ENCODE measurements at regions of chr19 and their contacts with region 1.

Region 1: DNA sequence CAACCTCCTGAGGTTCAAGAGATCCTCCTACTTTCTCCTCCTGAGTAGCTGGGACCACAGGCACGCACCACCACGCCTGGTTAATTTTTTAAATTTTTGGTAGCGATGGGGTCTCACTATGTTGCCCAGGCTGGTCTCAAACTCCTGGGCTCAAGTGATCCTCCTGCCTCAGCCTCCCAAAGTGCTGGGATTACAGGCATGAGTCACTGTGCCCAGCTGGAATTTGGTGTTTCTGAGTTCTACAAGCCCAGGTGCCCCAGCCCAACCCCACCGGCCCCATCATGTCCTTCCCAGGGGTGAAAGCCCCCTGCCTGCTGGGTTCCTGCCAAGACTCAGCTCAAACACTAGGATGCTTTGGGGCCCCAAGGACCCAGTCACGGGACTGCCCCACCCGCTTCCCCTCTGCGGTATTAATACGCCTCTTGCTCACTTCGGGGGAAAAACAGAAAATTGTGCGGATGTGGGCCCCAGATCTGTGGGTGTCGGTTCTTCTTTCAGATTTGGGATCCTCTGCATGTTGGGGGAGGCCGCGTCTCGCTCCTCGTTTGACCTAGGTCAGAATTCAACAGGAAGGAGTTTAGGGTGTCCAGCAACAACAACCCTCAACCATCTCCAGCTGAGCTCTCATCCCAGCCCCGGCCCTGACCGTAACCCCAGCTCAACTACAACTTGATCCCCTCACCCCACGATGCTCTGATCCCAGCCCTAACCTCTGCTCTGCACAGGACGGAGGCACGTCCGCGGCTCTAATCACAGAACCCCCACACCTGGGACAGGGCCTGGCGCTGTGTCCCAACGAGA is 3.7 kb upstream of the FCER2 start:
- DNase-seq: peak; percentile 73 to 83 (median 76)
- H3K4me3 ChIP-seq: peak overlapping the region; percentile 30 to 45
- H3K4me3 Mint-ChIP-seq: peak overlapping the region; percentile 76 to 90 (median 84)
- H3K27ac ChIP-seq: peak overlapping the region; percentile 72
- H3K27ac Mint-ChIP-seq: peak overlapping the region; percentile 87 to 98 (median 98)
- H3K4me1 ChIP-seq: peaks cover 38% of the 10 kb centered on the region
- H3K4me1 Mint-ChIP-seq: peaks cover 19 to 51% (median 33%) of the 10 kb centered on the region in 4 donors
- H3K27me3 ChIP-seq: no peaks in the 10 kb centered on the region
- H3K27me3 Mint-ChIP-seq: no peaks in the 10 kb centered on the region

Region 2: DNA sequence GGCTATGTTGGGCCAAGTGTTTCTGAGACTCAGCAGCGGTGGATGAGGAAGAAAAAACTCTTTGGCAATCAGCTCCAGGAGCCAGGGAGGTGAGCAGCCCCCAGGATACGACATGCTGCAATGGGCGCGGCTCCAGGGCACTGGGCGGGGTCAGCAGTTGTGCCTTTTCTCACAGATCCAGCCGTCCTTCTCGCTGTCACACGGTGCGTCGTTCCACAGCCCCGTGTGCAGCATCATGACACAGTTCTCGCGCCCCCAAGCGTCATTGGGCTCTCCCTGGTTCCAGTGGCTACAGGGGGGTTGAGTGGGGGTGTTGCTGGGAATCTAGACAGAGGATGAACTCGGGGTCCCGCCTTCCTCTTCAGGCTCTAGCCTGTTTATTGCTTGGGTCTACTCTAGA is 23.6 kb after region 1 on chr19:
- CTCF ChIA-PET with region 1: no interaction called
- POLR2A ChIA-PET with region 1: no interaction called
- intact Hi-C with region 1: no loop called
- DNase-seq: no peak
- H3K4me3 ChIP-seq: no peak overlapping the region
- H3K4me3 Mint-ChIP-seq: peak overlapping the region in 2 of 8 donors; percentile 34 to 49
- H3K27ac ChIP-seq: no peak overlapping the region
- H3K27ac Mint-ChIP-seq: no peak overlapping the region
- H3K4me1 ChIP-seq: peaks cover 17% of the 10 kb centered on the region
- H3K4me1 Mint-ChIP-seq: peaks cover 2 to 17% (median 12%) of the 10 kb centered on the region in 4 donors
- H3K27me3 ChIP-seq: peaks cover 21% of the 10 kb centered on the region
- H3K27me3 Mint-ChIP-seq: peaks cover 33 to 34% of the 10 kb centered on the region in 2 donors

Region 3: GRCh38 chr19:7751157-7751783 is 45.7 kb after region 1 on chr19:
- CTCF ChIA-PET with region 1: no interaction called
- POLR2A ChIA-PET with region 1: no interaction called
- intact Hi-C with region 1: loop called (anchors 10 kb)
- DNase-seq: peak in 2 of 5 donors; percentile 40 to 64
- H3K4me3 ChIP-seq: no peak overlapping the region
- H3K4me3 Mint-ChIP-seq: peak overlapping the region in 1 of 8 donors; percentile 55
- H3K27ac ChIP-seq: no peak overlapping the region
- H3K27ac Mint-ChIP-seq: peak overlapping the region in 4 of 7 donors; percentile 17 to 77 (median 59)
- H3K4me1 ChIP-seq: no peaks in the 10 kb centered on the region
- H3K4me1 Mint-ChIP-seq: peaks cover 3 to 10% (median 8%) of the 10 kb centered on the region in 4 donors
- H3K27me3 ChIP-seq: no peaks in the 10 kb centered on the region
- H3K27me3 Mint-ChIP-seq: peaks cover 4 to 7% of the 10 kb centered on the region in 2 donors

Measured in CD4-positive, alpha-beta memory T cell (primary cell).